ENCODE measurements at regions of chr10 and their contacts with region 1.

Region 1: GRCh38 chr10:101042667-101043355 is 11.8 kb downstream of the SFXN3 start:
- DNase-seq: peak; percentile 85
- H3K4me3 Mint-ChIP-seq: peak overlapping the region; percentile 91
- H3K27ac Mint-ChIP-seq: peak overlapping the region; percentile 84
- H3K4me1 Mint-ChIP-seq: peaks cover 27% of the 10 kb centered on the region
- H3K27me3 Mint-ChIP-seq: peaks cover 20% of the 10 kb centered on the region

Region 2: GRCh38 chr10:99667108-99667751 is 1375.6 kb before region 1 on chr10:
- intact Hi-C with region 1: no loop called
- DNase-seq: no peak
- H3K4me3 Mint-ChIP-seq: no peak overlapping the region
- H3K27ac Mint-ChIP-seq: no peak overlapping the region
- H3K4me1 Mint-ChIP-seq: no peaks in the 10 kb centered on the region
- H3K27me3 Mint-ChIP-seq: no peaks in the 10 kb centered on the region

Region 3: DNA sequence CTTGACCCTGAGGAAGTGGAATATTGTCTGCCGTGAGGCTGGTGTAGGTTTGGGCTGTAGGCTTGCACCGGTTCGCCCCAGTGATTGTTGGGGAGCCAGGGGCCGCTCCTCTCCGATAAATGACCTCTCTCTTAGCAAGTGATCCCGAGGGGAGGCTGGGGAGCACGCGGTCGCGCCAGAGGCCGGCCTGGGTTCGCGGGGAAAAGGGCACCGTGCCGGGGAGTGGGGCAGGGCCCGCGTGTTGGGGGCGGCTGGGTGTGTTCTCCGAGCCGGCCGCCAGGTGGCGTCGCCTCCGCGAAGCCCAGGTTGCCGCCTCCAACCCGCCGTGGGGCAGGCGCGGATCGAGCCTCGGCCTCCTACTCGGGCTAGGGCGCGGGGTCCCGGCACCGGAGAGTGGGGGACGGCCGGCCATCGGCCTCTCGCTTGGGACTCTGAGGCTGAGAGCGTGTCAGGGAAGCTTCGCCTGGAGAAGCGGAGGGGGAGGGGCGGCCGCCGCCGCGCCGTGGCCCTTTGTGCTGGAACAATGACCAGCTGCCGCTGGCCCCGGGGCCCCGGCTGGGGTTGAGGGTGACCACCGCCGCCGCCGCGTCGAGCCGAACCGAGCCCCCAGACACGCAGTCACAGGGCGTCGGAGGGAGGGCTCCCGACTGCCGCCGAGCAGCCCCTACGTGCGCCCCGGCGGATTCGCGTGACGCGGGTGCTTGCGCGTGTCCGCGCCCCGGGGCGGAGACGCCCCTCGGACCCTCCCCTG is 43.6 kb before region 1 on chr10:
- intact Hi-C with region 1: loop called (anchors 1 kb)
- DNase-seq: peak; percentile 77
- H3K4me3 Mint-ChIP-seq: peak overlapping the region; percentile 88
- H3K27ac Mint-ChIP-seq: peak overlapping the region; percentile 93
- H3K4me1 Mint-ChIP-seq: peaks cover 29% of the 10 kb centered on the region
- H3K27me3 Mint-ChIP-seq: peaks cover 4% of the 10 kb centered on the region